Heart right ventricle (tissue), 16 donors: ENCODE measurements at regions of chr6 and their contacts with region 1.

Region 1: GRCh38 chr6:75208298-75209183 is 2.7 kb upstream of the COL12A1 start:
- DNase-seq: peak; percentile 84 to 87
- ATAC-seq: peak; percentile 53 to 76 (median 71)
- H3K4me3 ChIP-seq: peak overlapping the region in 9 of 10 donors; percentile 14 to 49 (median 37)
- H3K27ac ChIP-seq: peak overlapping the region in 7 of 10 donors; percentile 23 to 71 (median 60)
- H3K4me1 ChIP-seq: peaks cover 0 to 70% (median 43%) of the 10 kb centered on the region in 9 donors
- H3K27me3 ChIP-seq: peaks cover 0 to 77% (median 42%) of the 10 kb centered on the region in 7 donors
- CTCF ChIP-seq: peak; percentile 59 to 95 (median 88)

Region 2: GRCh38 chr6:73675466-73676098 is 1533.0 kb before region 1 on chr6:
- intact Hi-C with region 1: loop called in 7 of 10 experiments (anchors 5 to 10 kb)
- DNase-seq: peak; percentile 51 to 84
- ATAC-seq: peak; percentile 84 to 90 (median 88)
- H3K4me3 ChIP-seq: no peak overlapping the region
- H3K27ac ChIP-seq: no peak overlapping the region
- H3K4me1 ChIP-seq: peaks cover 0 to 11% (median 0%) of the 10 kb centered on the region in 9 donors
- H3K27me3 ChIP-seq: no peaks in the 10 kb centered on the region
- CTCF ChIP-seq: peak; percentile 88 to 97 (median 91)

Region 3: GRCh38 chr6:73747289-73747688 is 1461.3 kb before region 1 on chr6:
- intact Hi-C with region 1: loop called in 1 of 10 experiments (anchors 5 kb)
- DNase-seq: no peak
- ATAC-seq: no peak
- H3K4me3 ChIP-seq: peak overlapping the region in 1 of 10 donors; percentile 6
- H3K27ac ChIP-seq: peak overlapping the region in 1 of 10 donors; percentile 65
- H3K4me1 ChIP-seq: peaks cover 0 to 11% (median 0%) of the 10 kb centered on the region in 9 donors
- H3K27me3 ChIP-seq: no peaks in the 10 kb centered on the region
- CTCF ChIP-seq: no peak

Region 4: GRCh38 chr6:73969971-73970970 is 1238.3 kb before region 1 on chr6:
- intact Hi-C with region 1: loop called in 7 of 10 experiments (anchors 2 to 10 kb)
- DNase-seq: peak in 1 of 2 donors; percentile 28
- ATAC-seq: peak in 5 of 8 donors; percentile 35 to 53 (median 37)
- H3K4me3 ChIP-seq: no peak overlapping the region
- H3K27ac ChIP-seq: no peak overlapping the region
- H3K4me1 ChIP-seq: peaks cover 0 to 21% (median 0%) of the 10 kb centered on the region in 9 donors
- H3K27me3 ChIP-seq: no peaks in the 10 kb centered on the region
- CTCF ChIP-seq: peak in 8 of 9 donors; percentile 35 to 68 (median 56)

Region 5: DNA sequence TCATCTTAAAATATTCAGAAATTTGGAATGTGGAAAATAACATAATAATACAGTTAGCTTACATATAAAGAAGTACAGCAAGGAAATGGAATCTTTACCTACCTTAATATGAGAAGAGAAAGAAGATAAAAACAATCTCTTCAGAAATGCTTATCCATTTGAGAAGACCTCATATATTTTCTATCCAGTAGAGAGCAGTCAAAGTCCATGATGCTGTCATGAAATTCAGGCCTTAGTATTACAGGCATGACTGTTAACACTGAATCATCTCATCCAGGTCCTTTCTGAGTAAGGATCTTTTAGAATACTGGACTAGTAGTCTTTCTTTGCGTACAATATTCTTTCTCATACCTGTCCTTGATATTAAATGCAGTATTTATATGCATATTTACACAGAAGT is 799.1 kb before region 1 on chr6:
- intact Hi-C with region 1: loop called in 4 of 10 experiments (anchors 2 to 10 kb)
- DNase-seq: no peak
- ATAC-seq: peak in 5 of 8 donors; percentile 34 to 76 (median 67)
- H3K4me3 ChIP-seq: no peak overlapping the region
- H3K27ac ChIP-seq: no peak overlapping the region
- H3K4me1 ChIP-seq: no peaks in the 10 kb centered on the region
- H3K27me3 ChIP-seq: no peaks in the 10 kb centered on the region
- CTCF ChIP-seq: peak in 8 of 9 donors; percentile 8 to 62 (median 44)

Region 6: GRCh38 chr6:74749211-74750142 is 459.1 kb before region 1 on chr6:
- intact Hi-C with region 1: loop called in 5 of 10 experiments (anchors 5 to 10 kb)
- DNase-seq: no peak
- ATAC-seq: peak in 1 of 8 donors; percentile 30
- H3K4me3 ChIP-seq: no peak overlapping the region
- H3K27ac ChIP-seq: no peak overlapping the region
- H3K4me1 ChIP-seq: no peaks in the 10 kb centered on the region
- H3K27me3 ChIP-seq: no peaks in the 10 kb centered on the region
- CTCF ChIP-seq: no peak

Region 7: DNA sequence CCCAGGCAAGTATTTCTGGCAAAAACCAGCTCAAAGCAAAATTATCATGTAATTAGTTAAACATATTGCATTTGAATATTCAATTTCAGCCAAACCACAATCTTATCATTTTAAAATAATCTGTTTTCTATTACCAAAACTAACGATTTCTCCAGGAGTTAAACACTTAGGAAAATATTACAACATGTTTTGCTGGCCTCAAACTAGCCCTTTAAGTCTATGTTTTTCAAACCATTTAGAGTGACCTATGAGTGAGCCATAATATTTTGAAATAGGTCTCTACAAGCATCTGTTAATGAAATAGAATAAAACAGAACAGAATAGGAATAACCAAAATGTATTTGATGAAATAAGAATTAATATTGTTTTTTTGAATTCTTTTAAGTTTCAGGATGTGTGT is 373.6 kb before region 1 on chr6:
- intact Hi-C with region 1: no loop called
- DNase-seq: no peak
- ATAC-seq: peak in 1 of 8 donors; percentile 33
- H3K4me3 ChIP-seq: no peak overlapping the region
- H3K27ac ChIP-seq: no peak overlapping the region
- H3K4me1 ChIP-seq: no peaks in the 10 kb centered on the region
- H3K27me3 ChIP-seq: no peaks in the 10 kb centered on the region
- CTCF ChIP-seq: no peak